ENCODE measurements at regions of chr22 and their contacts with region 1.

Region 1: GRCh38 chr22:17266251-17266971 is 47.2 kb upstream of the ADA2 start:
- DNase-seq: peak in 1 of 2 experiments; percentile 42
- H3K4me3 ChIP-seq: no peak overlapping the region
- H3K4me1 ChIP-seq: peaks cover 11% of the 10 kb centered on the region
- H3K27me3 ChIP-seq: no peaks in the 10 kb centered on the region

Region 2: DNA sequence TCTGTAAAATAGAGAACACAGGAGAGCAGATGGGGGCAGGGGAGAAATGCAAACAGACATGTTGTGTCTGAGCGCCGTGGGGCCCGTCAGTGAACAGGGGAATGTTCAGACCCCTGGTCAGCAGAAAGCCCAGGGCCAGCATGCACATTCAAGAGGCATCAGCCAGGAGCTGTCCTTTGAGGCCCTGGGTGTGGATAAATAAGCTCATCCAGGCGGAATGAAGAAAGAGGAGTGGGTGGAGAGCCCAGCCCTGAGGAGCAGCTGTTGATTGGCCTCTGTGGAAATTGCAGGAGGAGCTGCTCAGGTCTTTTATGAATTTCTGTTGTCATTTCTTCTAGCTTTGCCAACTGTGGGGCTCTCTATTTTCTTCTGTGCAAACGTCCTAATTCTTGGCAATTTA is 53.1 kb after region 1 on chr22:
- in situ Hi-C with region 1: loop called (anchors 10 kb)
- DNase-seq: no peak
- H3K4me3 ChIP-seq: no peak overlapping the region
- H3K4me1 ChIP-seq: no peaks in the 10 kb centered on the region
- H3K27me3 ChIP-seq: no peaks in the 10 kb centered on the region

Region 3: GRCh38 chr22:17483688-17484381 is 217.4 kb after region 1 on chr22:
- in situ Hi-C with region 1: no loop called
- DNase-seq: no peak
- H3K4me3 ChIP-seq: no peak overlapping the region
- H3K4me1 ChIP-seq: peaks cover 4% of the 10 kb centered on the region; the same call in 1 of the 2 replicates
- H3K27me3 ChIP-seq: no peaks in the 10 kb centered on the region